Endothelial cell of umbilical vein (primary cell): ENCODE measurements at regions of chr11 and their contacts with region 1.

Region 1: DNA sequence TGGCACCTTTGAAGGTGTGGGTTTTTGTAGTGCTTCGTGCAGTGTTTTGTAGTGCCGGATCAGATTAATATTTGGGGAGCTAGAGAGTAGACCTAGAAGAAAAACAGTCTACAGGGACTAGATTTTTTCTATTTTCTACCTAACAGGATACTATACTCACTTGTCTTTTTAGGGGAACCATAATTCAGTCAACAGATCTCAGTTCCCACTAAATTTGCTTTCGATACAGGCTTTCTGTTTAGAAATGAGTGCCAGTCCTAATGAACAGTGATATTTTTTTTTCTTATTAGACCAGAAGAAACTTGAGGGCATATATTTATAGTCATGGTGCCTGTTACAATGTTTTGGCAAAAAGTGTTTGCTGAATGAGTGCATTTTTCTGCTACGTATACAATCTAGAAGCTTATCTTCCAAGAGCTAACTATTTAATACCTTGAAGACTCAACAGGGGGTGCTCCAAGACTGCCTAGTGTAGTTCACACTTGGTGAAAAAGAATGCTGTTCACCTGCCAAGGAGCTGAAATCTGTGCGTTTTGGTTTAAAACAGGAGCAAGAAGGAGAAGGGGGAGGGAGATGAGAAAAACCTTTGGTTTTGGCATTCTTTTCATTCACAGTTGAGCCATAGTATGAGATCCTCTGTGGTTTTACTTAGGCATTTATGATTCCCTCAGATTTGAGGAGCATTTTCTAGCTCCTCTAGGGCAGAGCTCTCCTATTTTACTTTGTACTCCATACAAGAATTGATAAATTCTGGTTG is 44.9 kb upstream of the VSTM5 start:
- DNase-seq: peak; percentile 40
- H3K4me3 ChIP-seq: no peak overlapping the region
- H3K27ac ChIP-seq: no peak overlapping the region
- H3K4me1 ChIP-seq: no peaks in the 10 kb centered on the region
- H3K27me3 ChIP-seq: no peaks in the 10 kb centered on the region
- CTCF ChIP-seq: peak; percentile 20 to 32
- POLR2A ChIP-seq: no peak

Region 2: GRCh38 chr11:93807980-93808379 is 87.3 kb before region 1 on chr11:
- CTCF ChIA-PET with region 1: no interaction called
- POLR2A ChIA-PET with region 1: no interaction called
- dilution Hi-C with region 1: no loop called
- intact Hi-C with region 1: no loop called
- DNase-seq: no peak
- H3K4me3 ChIP-seq: no peak overlapping the region
- H3K27ac ChIP-seq: no peak overlapping the region
- H3K4me1 ChIP-seq: no peaks in the 10 kb centered on the region
- H3K27me3 ChIP-seq: no peaks in the 10 kb centered on the region
- CTCF ChIP-seq: no peak
- POLR2A ChIP-seq: no peak

Region 3: DNA sequence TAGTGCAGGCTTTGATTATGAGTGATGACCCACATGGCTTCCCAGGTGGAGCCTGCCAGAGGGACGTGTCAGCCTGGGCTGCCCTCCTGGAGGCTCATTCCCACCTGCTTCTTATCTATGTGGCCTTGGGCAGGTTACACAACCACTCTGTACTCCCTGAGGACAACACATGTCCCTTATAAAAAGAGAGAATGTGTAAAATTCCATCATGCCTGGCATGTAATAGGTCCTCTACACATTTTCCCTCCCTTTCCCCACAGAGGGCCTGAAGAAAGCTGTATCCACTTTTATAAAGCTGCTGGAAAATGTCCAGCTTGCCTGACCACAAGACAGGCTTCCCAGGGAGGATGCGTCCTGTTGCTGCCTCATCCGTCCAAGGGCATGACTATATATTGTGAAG is 10.1 kb after region 1 on chr11:
- CTCF ChIA-PET with region 1: interaction called, 12 read pairs
- POLR2A ChIA-PET with region 1: no interaction called
- dilution Hi-C with region 1: no loop called
- intact Hi-C with region 1: no loop called
- DNase-seq: no peak
- H3K4me3 ChIP-seq: no peak overlapping the region
- H3K27ac ChIP-seq: no peak overlapping the region
- H3K4me1 ChIP-seq: no peaks in the 10 kb centered on the region
- H3K27me3 ChIP-seq: no peaks in the 10 kb centered on the region
- CTCF ChIP-seq: no peak
- POLR2A ChIP-seq: no peak

Region 4: GRCh38 chr11:94417386-94417987 is 522.2 kb after region 1 on chr11:
- CTCF ChIA-PET with region 1: interaction called, 29 read pairs
- POLR2A ChIA-PET with region 1: no interaction called
- dilution Hi-C with region 1: no loop called
- intact Hi-C with region 1: loop called (anchors 5 kb)
- DNase-seq: peak; percentile 32
- H3K4me3 ChIP-seq: no peak overlapping the region
- H3K27ac ChIP-seq: no peak overlapping the region
- H3K4me1 ChIP-seq: no peaks in the 10 kb centered on the region
- H3K27me3 ChIP-seq: no peaks in the 10 kb centered on the region
- CTCF ChIP-seq: peak; percentile 15 to 24
- POLR2A ChIP-seq: no peak

Region 5: DNA sequence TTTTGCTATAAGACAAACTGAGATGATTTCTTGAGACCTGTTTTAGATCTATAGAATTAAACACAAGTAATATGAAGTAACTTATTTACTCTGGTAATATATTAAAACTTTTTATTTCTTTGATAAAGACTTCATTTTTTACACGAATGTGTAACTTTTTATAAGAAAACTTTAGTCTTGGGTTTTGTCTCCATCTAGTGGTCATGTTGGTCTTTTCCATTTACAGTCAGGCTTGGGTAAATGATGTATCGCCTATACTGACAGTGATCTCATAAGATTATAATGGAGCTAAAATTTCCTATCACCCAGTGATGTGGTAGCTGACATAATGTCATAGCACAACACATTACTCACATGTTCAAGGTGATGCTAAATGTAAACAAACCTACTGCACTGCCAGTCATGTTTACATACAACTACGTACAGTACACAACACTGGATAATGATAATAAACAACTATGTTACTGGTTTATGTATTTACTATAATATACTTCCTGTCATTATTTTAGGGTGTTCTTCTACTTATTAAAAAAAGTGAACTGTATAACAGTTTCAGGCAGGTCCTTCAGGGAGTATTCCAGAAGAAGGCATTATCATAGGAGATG is 609.5 kb after region 1 on chr11:
- CTCF ChIA-PET with region 1: interaction called, 84 read pairs
- POLR2A ChIA-PET with region 1: no interaction called
- dilution Hi-C with region 1: no loop called
- intact Hi-C with region 1: loop called (anchors 1 kb)
- DNase-seq: peak; percentile 66
- H3K4me3 ChIP-seq: no peak overlapping the region
- H3K27ac ChIP-seq: no peak overlapping the region
- H3K4me1 ChIP-seq: no peaks in the 10 kb centered on the region
- H3K27me3 ChIP-seq: peaks cover 0 to 2% of the 10 kb centered on the region in 2 experiments
- CTCF ChIP-seq: peak; percentile 33 to 40
- POLR2A ChIP-seq: no peak

Region 6: GRCh38 chr11:94767761-94768601 is 872.7 kb after region 1 on chr11 and contains the start of gene AMOTL1:
- CTCF ChIA-PET with region 1: no interaction called
- POLR2A ChIA-PET with region 1: no interaction called
- dilution Hi-C with region 1: no loop called
- intact Hi-C with region 1: no loop called
- DNase-seq: peak; percentile 85
- H3K4me3 ChIP-seq: peak within 1 kb of the TSS; percentile 55 to 76 (median 73)
- H3K27ac ChIP-seq: peak within 1 kb of the TSS; percentile 85
- H3K4me1 ChIP-seq: peaks cover 19% of the 10 kb centered on the region
- H3K27me3 ChIP-seq: no peaks in the 10 kb centered on the region
- CTCF ChIP-seq: no peak
- POLR2A ChIP-seq: peak; percentile 77
- total RNA-seq, gene AMOTL1: 37.8 and 41.8 TPM in 2 replicates